Transverse colon (tissue), 4 donors: ENCODE measurements at regions of chr4 and their contacts with region 1.

Region 1: GRCh38 chr4:38078590-38079421 is 118.6 kb downstream of the PTTG2 start:
- DNase-seq: peak; percentile 63
- H3K4me3 ChIP-seq: no peak overlapping the region
- H3K27ac ChIP-seq: peak overlapping the region; percentile 85 to 93 (median 88)
- H3K4me1 ChIP-seq: peaks cover 25 to 76% (median 48%) of the 10 kb centered on the region in 4 donors
- H3K27me3 ChIP-seq: no peaks in the 10 kb centered on the region
- CTCF ChIP-seq: no peak
- EP300 ChIP-seq: no peak
- POLR2A ChIP-seq: peak; percentile 64

Region 2: DNA sequence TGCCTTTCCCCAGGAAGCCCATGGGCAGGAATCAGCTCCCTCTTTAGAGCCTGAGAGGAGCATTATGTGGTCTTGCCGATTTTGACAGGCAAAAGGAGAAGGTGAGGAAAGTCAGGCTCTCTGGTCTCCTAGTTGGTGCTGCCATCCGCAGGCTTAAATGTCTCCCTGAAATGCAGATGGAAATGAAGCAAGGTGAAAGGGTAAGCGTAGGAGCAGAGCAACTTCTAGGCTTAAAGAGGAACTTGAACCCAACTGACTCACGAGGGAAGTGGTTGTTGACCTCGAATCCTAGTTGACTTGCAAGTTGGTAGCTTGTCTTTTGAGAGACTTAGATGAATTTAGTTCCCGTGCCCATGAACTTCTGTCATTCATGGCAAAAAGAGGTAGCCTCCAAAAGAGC is 87.3 kb after region 1 on chr4:
- in situ Hi-C with region 1: loop called in 3 of 4 experiments (anchors 5 to 10 kb)
- intact Hi-C with region 1: no loop called
- DNase-seq: no peak
- H3K4me3 ChIP-seq: no peak overlapping the region
- H3K27ac ChIP-seq: no peak overlapping the region
- H3K4me1 ChIP-seq: peaks cover 0 to 11% (median 7%) of the 10 kb centered on the region in 4 donors
- H3K27me3 ChIP-seq: no peaks in the 10 kb centered on the region
- CTCF ChIP-seq: no peak
- EP300 ChIP-seq: no peak
- POLR2A ChIP-seq: no peak

Region 3: GRCh38 chr4:38179690-38180377 is 101.0 kb after region 1 on chr4:
- in situ Hi-C with region 1: loop called in 2 of 4 experiments (anchors 10 kb)
- intact Hi-C with region 1: no loop called
- DNase-seq: peak; percentile 88
- H3K4me3 ChIP-seq: no peak overlapping the region
- H3K27ac ChIP-seq: peak overlapping the region; percentile 36 to 65 (median 52)
- H3K4me1 ChIP-seq: peaks cover 5 to 32% (median 16%) of the 10 kb centered on the region in 4 donors
- H3K27me3 ChIP-seq: no peaks in the 10 kb centered on the region
- CTCF ChIP-seq: peak; percentile 90 to 97 (median 94)
- EP300 ChIP-seq: no peak
- POLR2A ChIP-seq: no peak

Region 4: GRCh38 chr4:38612646-38613414 is 534.0 kb after region 1 on chr4:
- in situ Hi-C with region 1: no loop called
- intact Hi-C with region 1: no loop called
- DNase-seq: no peak
- H3K4me3 ChIP-seq: no peak overlapping the region
- H3K27ac ChIP-seq: peak overlapping the region; percentile 57 to 80 (median 74)
- H3K4me1 ChIP-seq: peaks cover 13 to 62% (median 36%) of the 10 kb centered on the region in 4 donors
- H3K27me3 ChIP-seq: no peaks in the 10 kb centered on the region
- CTCF ChIP-seq: no peak
- EP300 ChIP-seq: no peak
- POLR2A ChIP-seq: no peak